ENCODE measurements at regions of chr19 and their contacts with region 1.

Region 1: DNA sequence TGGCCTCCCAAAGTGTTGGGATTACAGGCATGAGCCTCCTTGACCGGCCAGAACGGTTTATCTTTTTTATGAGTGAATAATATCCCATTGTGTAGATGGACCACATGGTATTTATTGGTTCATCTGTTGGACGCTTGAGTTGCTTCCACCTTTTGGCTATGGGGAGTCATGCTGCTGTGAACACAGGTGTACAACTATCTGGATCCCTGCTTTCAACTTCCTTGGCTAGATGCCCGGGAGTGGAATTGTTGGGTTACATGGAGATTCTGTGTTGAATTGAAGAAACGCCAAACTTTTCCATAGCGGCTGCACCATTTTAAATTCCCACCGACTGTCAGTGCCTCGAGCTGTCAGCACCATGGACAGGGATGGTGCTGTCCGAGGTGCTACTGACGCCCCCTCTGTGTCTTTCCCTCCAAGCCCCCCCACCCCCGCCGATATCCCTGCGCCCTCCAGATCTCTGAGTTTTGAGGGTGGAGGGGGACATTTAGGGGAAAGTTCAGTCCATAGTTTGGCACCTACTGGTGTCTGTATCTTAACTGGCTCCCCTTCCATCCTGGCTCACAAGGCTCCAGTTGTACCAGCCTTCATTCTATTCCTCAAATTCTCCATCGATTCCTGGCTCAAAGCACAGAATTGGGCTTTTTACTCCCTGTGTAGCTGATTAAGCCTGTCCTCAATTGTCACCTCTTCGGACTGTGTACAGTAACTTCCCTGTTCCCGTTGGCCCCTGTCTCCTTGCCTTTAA is 27.3 kb downstream of the PNPLA6 start:
- DNase-seq: peak; percentile 47
- ATAC-seq: no peak
- H3K4me3 Mint-ChIP-seq: no peak overlapping the region
- H3K27ac Mint-ChIP-seq: no peak overlapping the region
- H3K4me1 Mint-ChIP-seq: no peaks in the 10 kb centered on the region
- H3K27me3 Mint-ChIP-seq: no peaks in the 10 kb centered on the region; the same call in 1 of the 2 replicates
- CTCF ChIP-seq: no peak

Region 2: DNA sequence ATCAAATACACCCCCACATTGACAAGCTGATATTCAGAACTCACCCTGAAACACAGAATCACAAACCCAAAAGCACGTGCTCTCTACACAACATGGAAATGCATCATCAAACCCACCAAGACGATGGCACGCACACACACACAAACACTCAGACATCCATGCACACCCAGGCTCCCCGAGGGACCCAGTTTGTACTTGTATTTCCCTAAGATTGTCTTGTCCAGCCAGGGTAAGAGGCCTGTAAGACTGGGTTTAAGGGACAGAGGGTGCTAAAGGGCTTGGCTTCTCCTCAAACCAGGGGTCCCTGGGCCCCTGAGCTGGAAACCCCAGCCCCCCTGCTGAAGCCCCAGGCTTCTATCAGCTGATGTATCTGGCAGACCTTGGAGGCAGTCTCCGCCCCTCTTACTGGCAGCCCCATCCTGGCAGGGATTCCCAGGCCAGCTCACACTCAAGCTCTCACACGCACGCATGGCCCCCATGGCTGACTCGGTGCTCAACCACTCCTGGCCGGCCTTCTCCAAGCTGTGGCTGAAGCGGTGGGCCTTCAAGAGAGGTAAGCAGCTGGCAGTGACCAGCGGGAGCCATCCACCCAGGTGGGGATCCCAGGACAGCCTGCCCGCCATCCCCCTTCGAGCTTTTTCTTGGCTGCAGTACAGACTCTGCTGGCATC is 207.5 kb before region 1 on chr19:
- CTCF ChIA-PET with region 1: interaction called, 12 read pairs
- POLR2A ChIA-PET with region 1: no interaction called
- DNase-seq: no peak
- ATAC-seq: no peak
- H3K4me3 Mint-ChIP-seq: no peak overlapping the region
- H3K27ac Mint-ChIP-seq: no peak overlapping the region
- H3K4me1 Mint-ChIP-seq: no peaks in the 10 kb centered on the region
- H3K27me3 Mint-ChIP-seq: peaks cover 21% of the 10 kb centered on the region
- CTCF ChIP-seq: no peak

Region 3: GRCh38 chr19:7460562-7460966 is 102.3 kb before region 1 on chr19:
- CTCF ChIA-PET with region 1: interaction called, 13 read pairs
- POLR2A ChIA-PET with region 1: no interaction called
- DNase-seq: no peak
- ATAC-seq: no peak
- H3K4me3 Mint-ChIP-seq: no peak overlapping the region
- H3K27ac Mint-ChIP-seq: no peak overlapping the region
- H3K4me1 Mint-ChIP-seq: no peaks in the 10 kb centered on the region
- H3K27me3 Mint-ChIP-seq: no peaks in the 10 kb centered on the region; the same call in 1 of the 2 replicates
- CTCF ChIP-seq: no peak

Region 4: GRCh38 chr19:7550987-7551761 is 11.6 kb before region 1 on chr19:
- CTCF ChIA-PET with region 1: interaction called, 64 read pairs
- POLR2A ChIA-PET with region 1: interaction called, 4 read pairs
- DNase-seq: peak; percentile 95
- ATAC-seq: peak; percentile 86
- H3K4me3 Mint-ChIP-seq: peak overlapping the region; percentile 74
- H3K27ac Mint-ChIP-seq: peak overlapping the region; percentile 71
- H3K4me1 Mint-ChIP-seq: peaks cover 8% of the 10 kb centered on the region
- H3K27me3 Mint-ChIP-seq: peaks cover 5% of the 10 kb centered on the region; the same call in 1 of the 2 replicates
- CTCF ChIP-seq: no peak

Region 5: GRCh38 chr19:7605490-7606222 is 42.8 kb after region 1 on chr19:
- CTCF ChIA-PET with region 1: interaction called, 87 read pairs
- POLR2A ChIA-PET with region 1: interaction called, 5 read pairs
- DNase-seq: peak; percentile 89
- ATAC-seq: peak; percentile 89
- H3K4me3 Mint-ChIP-seq: no peak overlapping the region
- H3K27ac Mint-ChIP-seq: no peak overlapping the region; the same call in 1 of the 2 replicates
- H3K4me1 Mint-ChIP-seq: peaks cover 10% of the 10 kb centered on the region
- H3K27me3 Mint-ChIP-seq: no peaks in the 10 kb centered on the region
- CTCF ChIP-seq: no peak

Region 6: DNA sequence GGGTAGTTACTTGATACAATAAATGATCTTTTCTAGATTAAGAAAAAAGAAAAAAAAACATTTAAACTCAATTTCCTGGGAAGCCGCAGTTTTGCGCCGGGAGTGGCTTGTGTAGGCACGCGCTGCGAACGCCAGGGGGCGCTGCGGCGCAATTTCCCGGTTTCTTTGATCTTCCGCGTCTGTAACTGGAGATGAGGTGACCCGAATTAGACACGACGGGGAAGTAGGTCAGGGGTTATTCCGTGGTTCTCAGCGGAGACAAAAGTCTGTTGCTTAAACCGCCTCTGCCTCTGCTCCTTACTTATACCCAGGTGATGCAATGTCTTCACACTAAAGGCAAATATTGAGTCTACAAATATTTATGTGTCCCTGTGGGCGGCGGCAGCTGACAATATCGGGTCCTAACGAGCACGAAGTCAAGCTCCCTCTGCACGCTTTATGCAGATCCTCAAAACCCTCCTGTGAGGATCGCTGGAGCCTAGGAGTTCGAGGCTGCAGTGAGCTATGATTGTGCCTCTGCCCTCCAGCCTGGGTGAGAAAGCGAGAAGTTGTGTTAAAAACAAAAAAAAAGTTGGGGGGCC is 89.3 kb after region 1 on chr19:
- CTCF ChIA-PET with region 1: interaction called, 18 read pairs
- POLR2A ChIA-PET with region 1: no interaction called
- DNase-seq: peak; percentile 88
- ATAC-seq: peak; percentile 87
- H3K4me3 Mint-ChIP-seq: peak overlapping the region; percentile 44
- H3K27ac Mint-ChIP-seq: 0 out of 2 replicates have a peak overlapping the region, but pooled peaks have one; percentile 11
- H3K4me1 Mint-ChIP-seq: peaks cover 7% of the 10 kb centered on the region
- H3K27me3 Mint-ChIP-seq: peaks cover 59% of the 10 kb centered on the region
- CTCF ChIP-seq: peak; percentile 99

Region 7: DNA sequence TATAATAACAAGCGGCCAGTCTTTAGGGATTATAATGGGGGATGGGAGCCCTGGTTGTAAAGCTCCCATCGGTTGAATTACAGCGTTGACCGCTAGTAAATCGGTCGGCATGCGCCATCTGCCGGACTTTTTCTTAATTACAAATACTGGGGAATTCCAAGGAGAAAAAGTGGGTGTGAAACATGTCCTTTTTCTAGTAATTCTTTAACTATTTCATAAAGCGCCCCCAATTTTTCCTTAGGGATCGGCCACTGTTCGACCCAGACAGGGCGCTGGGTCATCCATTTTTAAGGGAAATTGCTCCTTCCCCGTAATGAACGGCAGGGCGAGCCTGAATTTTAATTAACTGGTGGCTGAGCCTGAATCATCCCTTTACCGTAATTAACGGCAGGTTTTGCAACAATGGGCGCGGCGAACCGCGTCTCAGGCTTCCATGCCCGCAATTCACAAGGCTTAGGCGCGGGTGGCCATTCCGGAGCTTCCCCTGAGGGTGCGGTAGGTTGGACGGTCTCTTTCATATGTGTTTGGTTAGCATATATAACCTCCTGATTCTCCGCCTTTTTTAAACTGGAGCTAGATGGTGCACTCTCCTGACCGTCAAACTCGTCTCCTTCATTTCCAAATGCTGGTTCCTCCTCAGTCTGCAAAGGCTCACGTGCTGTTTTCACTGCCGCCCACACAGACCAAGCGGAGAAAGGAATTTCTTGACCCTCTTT is 237.0 kb after region 1 on chr19:
- CTCF ChIA-PET with region 1: interaction called, 122 read pairs
- POLR2A ChIA-PET with region 1: interaction called, 7 read pairs
- DNase-seq: peak; percentile 81
- ATAC-seq: peak; percentile 72
- H3K4me3 Mint-ChIP-seq: peak overlapping the region; percentile 64
- H3K27ac Mint-ChIP-seq: no peak overlapping the region
- H3K4me1 Mint-ChIP-seq: peaks cover 21% of the 10 kb centered on the region
- H3K27me3 Mint-ChIP-seq: peaks cover 35% of the 10 kb centered on the region
- CTCF ChIP-seq: peak; percentile 57

Measured in WTC11 (cell line).